ENCODE measurements at regions of chr3 and their contacts with region 1.

Region 1: DNA sequence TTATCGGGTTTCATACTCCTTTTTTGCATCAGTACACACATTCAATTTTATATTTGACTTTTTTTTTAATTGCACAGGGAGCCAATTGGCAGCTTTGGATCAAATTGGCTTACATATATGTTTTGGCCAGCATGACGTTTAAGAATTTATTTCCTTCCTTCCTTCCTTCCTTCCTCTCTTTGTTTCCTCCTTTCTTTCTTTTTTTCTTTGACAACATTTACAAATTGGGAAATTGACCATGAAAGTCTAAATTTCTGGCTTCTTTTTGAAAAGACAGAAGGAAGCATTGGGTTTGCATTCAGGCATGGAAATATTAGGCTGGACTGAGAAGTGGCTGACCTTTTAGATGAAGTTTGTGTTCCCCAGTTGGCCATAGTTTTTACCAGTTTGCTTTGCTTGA is 103.4 kb upstream of the IGSF10 start:
- DNase-seq: no peak
- ATAC-seq: no peak
- H3K4me3 ChIP-seq: no peak overlapping the region
- H3K27ac ChIP-seq: no peak overlapping the region
- H3K4me1 ChIP-seq: peaks cover 10% of the 10 kb centered on the region
- H3K27me3 ChIP-seq: no peaks in the 10 kb centered on the region
- CTCF ChIP-seq: no peak

Region 2: DNA sequence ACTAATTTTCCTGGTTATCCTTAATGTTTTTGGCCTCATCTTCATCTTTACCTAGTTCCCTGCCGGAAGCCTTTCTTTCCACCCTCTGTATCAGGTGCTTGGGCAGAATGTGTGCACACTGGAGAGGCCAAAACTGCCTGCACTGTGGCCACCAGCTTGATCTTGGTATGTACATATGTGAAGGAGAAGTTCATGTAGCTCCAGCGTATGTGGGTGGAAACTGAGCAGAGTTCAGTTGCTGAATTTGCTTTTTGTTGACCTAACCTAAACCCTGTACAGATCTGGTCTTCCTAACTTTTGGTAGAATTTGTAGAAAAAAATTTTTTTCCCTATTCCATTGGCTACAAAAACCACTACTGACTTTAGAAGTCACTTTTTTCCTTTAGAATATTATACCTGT is 37.5 kb before region 1 on chr3:
- CTCF ChIA-PET with region 1: no interaction called
- POLR2A ChIA-PET with region 1: no interaction called
- intact Hi-C with region 1: no loop called
- DNase-seq: no peak
- ATAC-seq: no peak
- H3K4me3 ChIP-seq: no peak overlapping the region
- H3K27ac ChIP-seq: no peak overlapping the region
- H3K4me1 ChIP-seq: no peaks in the 10 kb centered on the region
- H3K27me3 ChIP-seq: no peaks in the 10 kb centered on the region
- CTCF ChIP-seq: no peak

Region 3: DNA sequence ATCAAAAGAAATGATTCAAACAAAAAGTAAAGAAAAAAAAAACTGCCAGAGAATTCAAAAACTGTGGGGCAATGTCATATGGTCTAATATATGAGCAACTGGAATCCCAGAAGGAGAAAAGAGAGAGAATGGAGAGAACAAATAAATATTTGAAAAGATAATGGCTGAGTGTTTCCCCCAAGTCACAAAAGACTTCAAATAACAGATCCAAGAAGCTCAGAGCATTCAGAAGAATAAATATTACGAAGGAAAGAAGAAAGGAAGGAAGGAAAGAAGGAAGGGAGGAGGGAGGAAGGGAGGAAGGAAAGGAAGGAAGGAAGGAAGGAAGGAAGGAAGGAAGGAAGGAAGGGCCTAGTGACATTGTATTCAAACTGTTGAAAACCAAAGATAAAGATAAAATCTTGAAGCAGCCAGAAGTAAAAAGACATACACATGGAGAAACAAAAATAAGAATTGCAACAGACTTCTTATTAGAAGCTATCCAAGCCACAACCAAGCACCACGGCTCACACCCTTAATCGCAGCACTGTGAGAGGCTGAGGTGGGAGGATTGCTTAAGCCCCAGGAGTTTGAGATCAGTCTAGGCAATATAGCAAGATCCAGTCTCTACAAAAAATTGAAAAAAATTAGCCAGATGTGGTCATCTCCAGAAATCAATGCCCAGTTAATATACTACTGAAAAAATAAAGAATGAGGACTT is 15.5 kb after region 1 on chr3:
- CTCF ChIA-PET with region 1: no interaction called
- POLR2A ChIA-PET with region 1: no interaction called
- intact Hi-C with region 1: loop called (anchors 1 kb)
- DNase-seq: no peak
- ATAC-seq: no peak
- H3K4me3 ChIP-seq: no peak overlapping the region
- H3K27ac ChIP-seq: no peak overlapping the region
- H3K4me1 ChIP-seq: no peaks in the 10 kb centered on the region
- H3K27me3 ChIP-seq: no peaks in the 10 kb centered on the region
- CTCF ChIP-seq: no peak

Region 4: GRCh38 chr3:151709847-151710246 is 145.6 kb after region 1 on chr3:
- CTCF ChIA-PET with region 1: no interaction called
- POLR2A ChIA-PET with region 1: no interaction called
- intact Hi-C with region 1: no loop called
- DNase-seq: no peak
- ATAC-seq: no peak
- H3K4me3 ChIP-seq: no peak overlapping the region
- H3K27ac ChIP-seq: no peak overlapping the region
- H3K4me1 ChIP-seq: no peaks in the 10 kb centered on the region
- H3K27me3 ChIP-seq: no peaks in the 10 kb centered on the region
- CTCF ChIP-seq: no peak

Measured in PC-3 (cell line).